Posterior cingulate gyrus (tissue), 11 donors: ENCODE measurements at regions of chr4 and their contacts with region 1.

Region 1: GRCh38 chr4:7295911-7296660 is 103.7 kb downstream of the SORCS2 start:
- DNase-seq: peak in 8 of 10 donors; percentile 55 to 94 (median 74)

Region 2: DNA sequence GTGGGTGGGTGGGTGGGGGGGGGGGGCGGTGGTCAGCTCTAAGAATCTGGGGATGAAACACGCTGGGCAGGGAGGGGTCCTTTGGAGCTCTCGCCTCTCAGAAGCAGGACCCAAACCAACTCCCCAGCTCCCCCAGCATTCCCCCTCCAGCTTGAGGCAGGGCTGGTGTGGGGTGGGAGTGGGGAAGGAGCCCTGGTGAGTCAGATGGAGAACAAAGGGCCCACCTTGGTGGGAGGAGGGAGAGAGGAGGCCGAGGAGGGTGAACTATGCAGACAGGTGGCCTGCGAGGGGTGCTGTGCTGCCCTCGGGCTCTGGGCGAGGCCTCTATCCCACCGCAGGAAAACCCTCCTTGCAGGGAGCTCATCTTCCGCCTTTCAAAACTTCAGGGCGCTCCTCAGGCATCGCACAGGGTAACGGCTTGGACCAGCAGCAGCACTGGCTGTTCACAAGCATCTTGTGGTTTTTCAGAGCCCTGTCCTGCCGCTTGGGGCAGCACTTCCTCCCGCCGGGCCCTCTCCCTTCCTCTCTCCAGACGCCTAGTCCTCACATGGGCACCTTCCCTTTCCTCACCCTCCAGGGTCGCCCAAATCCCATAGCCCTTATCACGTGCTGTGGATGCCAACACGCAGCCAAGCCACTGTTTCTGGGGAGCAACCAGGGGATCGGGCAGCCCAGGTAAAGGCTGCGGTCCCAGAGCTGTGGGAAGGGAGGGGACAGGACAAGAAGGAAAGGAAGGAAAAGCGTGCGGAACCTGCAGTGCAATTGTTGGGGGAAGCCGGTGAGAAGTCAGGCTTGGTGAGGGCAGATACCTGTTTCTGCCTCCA is 194.2 kb before region 1 on chr4:
- intact Hi-C with region 1: loop called (anchors 10 kb)
- DNase-seq: peak; percentile 74 to 98 (median 81)

Region 3: DNA sequence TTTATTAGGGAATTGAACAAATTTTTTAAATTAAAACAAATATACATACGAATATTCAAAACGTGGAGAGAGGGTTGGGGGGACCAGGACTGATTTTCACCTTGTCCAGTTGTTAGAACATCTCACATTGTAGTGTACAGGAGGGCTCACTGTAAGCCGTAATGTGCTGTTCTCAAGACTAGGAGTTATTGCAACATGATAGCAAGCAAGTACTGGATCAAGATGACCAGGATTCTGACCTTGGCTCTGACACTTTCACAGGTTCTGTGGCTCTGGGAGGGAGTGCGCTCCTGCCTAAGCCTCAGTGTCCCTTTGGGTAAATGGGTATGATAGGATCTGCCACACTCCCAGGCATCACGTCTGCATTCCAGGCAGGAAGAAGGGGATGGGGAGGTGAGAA is 44.8 kb before region 1 on chr4:
- intact Hi-C with region 1: loop called (anchors 2 kb)
- DNase-seq: peak in 2 of 10 donors; percentile 3 to 13

Region 4: DNA sequence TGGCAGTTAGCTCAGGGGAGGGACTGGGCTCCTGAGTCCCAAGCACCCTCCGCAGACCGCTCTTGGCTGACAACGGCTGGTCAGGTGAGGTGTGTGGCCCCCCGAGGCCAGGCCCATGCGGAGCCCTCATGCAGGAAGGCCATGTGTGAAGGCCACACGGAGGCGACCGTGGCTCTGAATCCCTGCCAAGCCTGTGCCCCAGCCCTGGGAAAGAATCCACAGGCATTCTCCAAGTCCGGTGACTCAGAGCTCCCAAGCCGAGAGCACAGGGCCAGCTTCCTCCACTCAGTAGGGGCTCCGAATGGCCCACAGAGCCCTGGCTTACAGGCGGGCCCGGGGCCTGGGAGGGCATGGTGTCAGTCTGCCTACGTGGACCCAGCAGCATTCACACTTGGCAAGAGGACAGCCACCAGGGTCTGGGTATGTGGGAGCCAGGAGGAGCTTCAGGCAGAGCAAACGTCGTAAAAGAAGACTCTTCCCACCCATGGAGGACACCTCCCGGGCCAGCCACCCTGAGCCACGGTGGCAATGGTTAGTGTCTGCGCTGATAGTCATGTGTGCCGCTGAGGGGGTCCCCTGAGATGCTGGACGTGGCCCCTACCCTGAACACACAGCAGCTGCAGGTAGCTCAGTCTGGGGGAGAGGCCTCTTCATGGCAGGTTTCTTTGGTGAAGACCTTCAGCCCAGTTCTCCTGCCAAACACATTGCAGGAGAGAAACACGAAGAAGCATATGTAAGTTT is 33.0 kb after region 1 on chr4:
- intact Hi-C with region 1: no loop called
- DNase-seq: peak in 8 of 10 donors; percentile 34 to 89 (median 66)